ENCODE measurements at regions of chr20 and their contacts with region 1.

Region 1: DNA sequence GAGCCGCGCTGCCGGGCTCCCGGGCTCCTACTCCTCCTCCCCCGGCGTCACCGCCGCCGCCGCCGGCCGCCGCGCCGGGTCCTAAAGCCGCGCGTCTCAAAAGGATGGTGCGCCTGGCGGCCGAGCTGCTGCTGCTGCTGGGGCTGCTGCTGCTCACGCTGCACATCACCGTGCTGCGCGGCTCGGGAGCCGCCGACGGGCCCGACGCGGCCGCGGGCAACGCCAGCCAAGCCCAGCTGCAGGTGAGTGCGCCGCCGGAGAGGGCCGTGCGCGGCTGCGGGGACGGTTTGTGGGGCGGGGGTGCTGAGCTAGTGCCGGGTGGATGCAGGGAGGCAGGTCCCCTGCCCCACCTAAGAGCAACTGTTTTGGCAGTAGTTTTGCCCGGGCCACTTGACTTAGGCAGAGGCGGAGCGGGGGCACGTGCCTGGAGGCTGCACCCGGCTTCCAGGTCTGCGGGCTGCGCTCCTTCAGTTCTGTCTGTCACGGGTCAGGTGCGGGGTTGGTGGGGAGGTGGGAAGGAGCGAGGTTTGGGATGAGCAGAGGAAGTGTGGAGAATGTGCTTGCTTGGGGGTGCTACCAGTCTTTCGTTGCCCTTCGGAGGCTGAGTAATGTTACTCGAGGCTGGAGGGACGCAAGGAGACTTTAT is 722 bp downstream of the ISM1 start:
- DNase-seq: peak; percentile 59 to 78 (median 72)
- ATAC-seq: peak; percentile 89
- H3K4me3 ChIP-seq: peak overlapping the region; percentile 39
- H3K4me3 Mint-ChIP-seq: peak overlapping the region; percentile 77 to 89 (median 85)
- H3K27ac ChIP-seq: peak overlapping the region; percentile 42
- H3K27ac Mint-ChIP-seq: peak overlapping the region in 8 of 9 donors; percentile 47 to 89 (median 76)
- H3K4me1 ChIP-seq: peaks cover 5 to 18% of the 10 kb centered on the region in 2 donors
- H3K4me1 Mint-ChIP-seq: peaks cover 6 to 26% (median 13%) of the 10 kb centered on the region in 7 donors
- H3K27me3 ChIP-seq: peaks cover 8 to 18% of the 10 kb centered on the region in 2 donors
- H3K27me3 Mint-ChIP-seq: peaks cover 20 to 69% (median 29%) of the 10 kb centered on the region in 5 donors

Region 2: DNA sequence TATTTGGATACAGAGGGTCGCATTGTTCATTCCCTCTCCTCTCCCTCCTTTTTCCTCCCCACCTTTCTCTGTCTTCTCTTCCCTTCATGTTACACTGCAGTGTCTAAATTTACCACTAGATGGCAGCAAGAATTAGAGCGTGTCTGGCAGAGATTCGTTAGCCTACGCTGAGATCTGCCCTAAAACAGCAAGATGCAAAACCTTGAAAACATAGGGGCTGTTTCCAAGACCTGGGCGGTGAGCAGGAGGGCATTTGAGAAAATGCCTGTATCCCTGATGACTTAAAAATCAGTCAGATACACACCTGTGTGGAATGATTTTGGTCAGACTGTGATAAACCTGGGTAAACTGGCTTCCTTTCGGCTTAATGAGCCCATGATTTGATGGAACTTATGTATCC is 102.2 kb before region 1 on chr20:
- CTCF ChIA-PET with region 1: no interaction called
- POLR2A ChIA-PET with region 1: no interaction called
- intact Hi-C with region 1: loop called in 1 of 2 experiments (anchors 1 kb)
- DNase-seq: peak in 8 of 9 donors; percentile 6 to 76 (median 66)
- ATAC-seq: peak; percentile 82
- H3K4me3 ChIP-seq: no peak overlapping the region
- H3K4me3 Mint-ChIP-seq: no peak overlapping the region
- H3K27ac ChIP-seq: no peak overlapping the region
- H3K27ac Mint-ChIP-seq: no peak overlapping the region
- H3K4me1 ChIP-seq: no peaks in the 10 kb centered on the region
- H3K4me1 Mint-ChIP-seq: no peaks in the 10 kb centered on the region
- H3K27me3 ChIP-seq: no peaks in the 10 kb centered on the region
- H3K27me3 Mint-ChIP-seq: no peaks in the 10 kb centered on the region

Region 3: DNA sequence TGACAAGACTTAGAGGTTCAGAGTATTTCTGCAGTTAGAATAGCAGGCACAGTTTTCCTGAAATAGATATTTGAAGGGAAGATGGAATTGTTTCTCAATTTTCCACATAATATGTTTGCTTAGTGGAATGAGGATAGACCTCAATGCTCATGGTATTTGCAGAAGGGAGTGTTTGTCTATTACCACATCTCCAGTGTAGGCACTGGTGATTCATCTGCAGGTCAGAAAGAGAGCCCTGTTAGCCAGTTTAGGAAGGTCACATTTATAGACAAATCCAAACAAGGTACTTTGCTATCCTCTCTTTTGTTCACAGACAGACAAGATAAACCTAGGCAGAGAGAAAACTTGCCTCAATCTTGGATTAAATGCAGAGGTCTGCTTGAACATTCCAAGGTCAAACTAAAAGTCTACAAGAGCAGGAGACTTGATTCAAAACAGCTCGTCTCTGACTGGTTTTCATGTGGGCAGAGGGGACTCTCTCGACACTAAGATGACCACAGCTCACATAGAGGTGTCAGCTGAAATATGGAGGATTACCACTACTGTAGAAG is 22.1 kb after region 1 on chr20:
- CTCF ChIA-PET with region 1: interaction called, 3 read pairs
- POLR2A ChIA-PET with region 1: interaction called, 5 read pairs
- intact Hi-C with region 1: loop called (anchors 1 kb)
- DNase-seq: no peak
- ATAC-seq: no peak
- H3K4me3 ChIP-seq: no peak overlapping the region
- H3K4me3 Mint-ChIP-seq: no peak overlapping the region
- H3K27ac ChIP-seq: no peak overlapping the region
- H3K27ac Mint-ChIP-seq: peak overlapping the region in 1 of 9 donors; percentile 96
- H3K4me1 ChIP-seq: peaks cover 16 to 26% of the 10 kb centered on the region in 2 donors
- H3K4me1 Mint-ChIP-seq: peaks cover 23 to 42% (median 32%) of the 10 kb centered on the region in 7 donors
- H3K27me3 ChIP-seq: no peaks in the 10 kb centered on the region
- H3K27me3 Mint-ChIP-seq: no peaks in the 10 kb centered on the region

Region 4: GRCh38 chr20:13251106-13251903 is 29.5 kb after region 1 on chr20:
- CTCF ChIA-PET with region 1: no interaction called
- POLR2A ChIA-PET with region 1: interaction called, 10 read pairs
- intact Hi-C with region 1: loop called (anchors 1 kb)
- DNase-seq: no peak
- ATAC-seq: no peak
- H3K4me3 ChIP-seq: no peak overlapping the region
- H3K4me3 Mint-ChIP-seq: peak overlapping the region in 2 of 10 donors; percentile 25 to 36
- H3K27ac ChIP-seq: no peak overlapping the region
- H3K27ac Mint-ChIP-seq: peak overlapping the region in 8 of 9 donors; percentile 4 to 97 (median 70)
- H3K4me1 ChIP-seq: peaks cover 25 to 49% of the 10 kb centered on the region in 2 donors
- H3K4me1 Mint-ChIP-seq: peaks cover 24 to 82% (median 58%) of the 10 kb centered on the region in 7 donors
- H3K27me3 ChIP-seq: no peaks in the 10 kb centered on the region
- H3K27me3 Mint-ChIP-seq: no peaks in the 10 kb centered on the region

Region 5: GRCh38 chr20:13302647-13303450 is 81.1 kb after region 1 on chr20:
- CTCF ChIA-PET with region 1: no interaction called
- POLR2A ChIA-PET with region 1: no interaction called
- intact Hi-C with region 1: loop called in 1 of 2 experiments (anchors 1 kb)
- DNase-seq: peak in 8 of 9 donors; percentile 10 to 51 (median 40)
- ATAC-seq: peak; percentile 72
- H3K4me3 ChIP-seq: no peak overlapping the region
- H3K4me3 Mint-ChIP-seq: no peak overlapping the region
- H3K27ac ChIP-seq: no peak overlapping the region
- H3K27ac Mint-ChIP-seq: no peak overlapping the region
- H3K4me1 ChIP-seq: no peaks in the 10 kb centered on the region
- H3K4me1 Mint-ChIP-seq: no peaks in the 10 kb centered on the region
- H3K27me3 ChIP-seq: no peaks in the 10 kb centered on the region
- H3K27me3 Mint-ChIP-seq: peaks cover 0 to 4% (median 0%) of the 10 kb centered on the region in 5 donors

Region 6: DNA sequence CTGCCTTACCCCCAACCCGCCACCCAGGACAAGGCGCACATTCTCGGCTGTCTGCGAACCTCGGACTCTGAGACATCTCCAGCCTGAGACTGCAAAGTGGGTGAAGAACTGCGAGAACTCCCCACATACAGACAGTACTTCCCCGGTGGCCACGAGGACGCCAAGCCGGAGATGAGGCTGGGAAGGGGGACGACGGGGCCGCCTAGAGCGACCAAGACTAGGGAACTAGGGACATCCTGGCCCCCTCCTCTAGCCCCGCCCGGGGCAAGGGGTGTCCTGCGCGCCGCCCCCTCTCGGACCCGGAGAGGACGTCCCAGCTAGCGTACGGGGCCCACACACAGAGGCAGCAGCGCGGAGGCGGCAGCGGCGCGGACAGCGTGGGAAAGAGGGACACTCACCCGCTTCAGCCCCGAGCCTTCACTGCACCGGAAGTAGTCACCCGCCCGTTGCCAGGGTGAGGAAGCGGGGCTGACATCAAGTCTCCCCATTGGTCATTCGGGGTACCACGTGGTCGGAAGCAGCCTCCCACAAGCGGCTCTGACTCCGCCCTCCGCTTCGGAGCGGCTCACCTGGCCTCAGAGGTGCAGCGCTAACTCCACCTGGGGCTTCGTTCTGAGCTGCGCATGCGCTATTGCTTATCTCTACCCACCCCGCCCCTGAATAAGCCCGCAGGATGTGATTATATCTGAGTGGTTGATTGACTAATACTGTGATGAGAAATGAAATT is 416.9 kb after region 1 on chr20 and contains the start of gene TASP1:
- CTCF ChIA-PET with region 1: no interaction called
- POLR2A ChIA-PET with region 1: no interaction called
- intact Hi-C with region 1: loop called in 1 of 2 experiments (anchors 5 kb)
- DNase-seq: peak; percentile 90 to 98 (median 96)
- ATAC-seq: peak; percentile 100
- H3K4me3 ChIP-seq: peak within 1 kb of the TSS; percentile 71
- H3K4me3 Mint-ChIP-seq: peak within 1 kb of the TSS; percentile 85 to 94 (median 90)
- H3K27ac ChIP-seq: peak within 1 kb of the TSS; percentile 76
- H3K27ac Mint-ChIP-seq: peak within 1 kb of the TSS; percentile 37 to 95 (median 83)
- H3K4me1 ChIP-seq: peaks cover 0 to 7% of the 10 kb centered on the region in 2 donors
- H3K4me1 Mint-ChIP-seq: peaks cover 7 to 36% (median 27%) of the 10 kb centered on the region in 7 donors
- H3K27me3 ChIP-seq: no peaks in the 10 kb centered on the region
- H3K27me3 Mint-ChIP-seq: peaks cover 0 to 10% (median 3%) of the 10 kb centered on the region in 5 donors
- total RNA-seq, gene TASP1: 10.6 to 14.3 (median 13.3) TPM

Region 7: GRCh38 chr20:13784893-13785715 is 563.3 kb after region 1 on chr20 and contains the starts of genes ESF1 and NDUFAF5:
- CTCF ChIA-PET with region 1: no interaction called
- POLR2A ChIA-PET with region 1: no interaction called
- intact Hi-C with region 1: loop called (anchors 1 kb)
- DNase-seq: peak; percentile 71 to 93 (median 90)
- ATAC-seq: peak; percentile 99
- H3K4me3 ChIP-seq: peak within 1 kb of the TSS; percentile 83
- H3K4me3 Mint-ChIP-seq: peak within 1 kb of the TSS; percentile 92 to 100 (median 99)
- H3K27ac ChIP-seq: peak within 1 kb of the TSS; percentile 91
- H3K27ac Mint-ChIP-seq: peak within 1 kb of the TSS; percentile 91 to 98 (median 96)
- H3K4me1 ChIP-seq: peaks cover 14 to 21% of the 10 kb centered on the region in 2 donors
- H3K4me1 Mint-ChIP-seq: peaks cover 32 to 85% (median 69%) of the 10 kb centered on the region in 7 donors
- H3K27me3 ChIP-seq: no peaks in the 10 kb centered on the region
- H3K27me3 Mint-ChIP-seq: peaks cover 0 to 2% (median 0%) of the 10 kb centered on the region in 5 donors
- total RNA-seq, gene ESF1: 7.9 to 16.9 (median 14.5) TPM
- total RNA-seq, gene NDUFAF5: 23.8 to 43.6 (median 28.9) TPM

Measured in naive thymus-derived CD4-positive, alpha-beta T cell (primary cell).